K562 (cell line): ENCODE measurements at regions of chr9 and their contacts with region 1.

Region 1: DNA sequence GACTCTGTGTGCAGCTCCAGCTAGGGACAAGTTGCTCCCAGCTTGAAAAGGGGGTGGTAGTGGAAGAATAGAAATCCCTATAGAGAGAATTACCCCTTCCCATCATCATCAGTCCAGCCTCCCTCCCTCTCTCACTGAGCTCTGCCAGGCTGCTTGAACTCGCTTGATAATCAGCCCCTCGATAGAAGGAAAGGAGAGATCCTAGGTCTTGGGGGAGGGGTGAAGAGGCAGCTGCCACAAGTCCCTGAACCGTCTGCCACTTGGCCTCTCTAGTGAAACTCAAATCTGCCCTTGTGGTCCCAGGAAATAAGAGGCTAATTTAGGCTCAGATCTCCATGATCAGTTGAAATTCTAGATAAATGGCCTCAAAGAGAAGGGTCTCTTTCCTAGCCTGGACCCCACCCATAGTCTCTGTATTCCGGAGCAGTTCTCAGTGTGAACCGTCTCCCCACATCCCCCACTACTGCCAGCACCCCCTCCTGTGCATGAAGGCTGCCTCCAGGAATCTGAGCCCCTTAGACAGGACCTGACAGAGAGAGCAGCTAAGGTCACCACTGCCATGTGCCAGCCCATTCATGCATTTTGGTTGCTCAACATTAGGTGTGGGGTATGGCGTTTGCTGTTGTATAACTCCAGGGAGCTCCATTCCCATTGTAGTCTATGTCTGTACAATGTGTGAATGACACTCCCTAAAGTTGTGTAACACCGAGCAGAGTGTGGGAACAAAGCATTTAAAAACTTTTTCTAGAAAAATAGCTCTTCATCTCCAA is 5.5 kb downstream of the DNAJB5 start:
- DNase-seq: no peak
- ATAC-seq: peak; percentile 7; the same call in 2 of the 3 replicates
- H3K4me3 ChIP-seq: no peak overlapping the region
- H3K27ac ChIP-seq: peak overlapping the region; percentile 56; the same call in 2 of the 3 replicates
- H3K4me1 ChIP-seq: peaks cover 54 to 69% of the 10 kb centered on the region in 2 experiments
- H3K27me3 ChIP-seq: no peaks in the 10 kb centered on the region
- CTCF ChIP-seq: no peak
- EP300 ChIP-seq: no peak
- POLR2A ChIP-seq: no peak
- RAD21 ChIP-seq: no peak

Region 2: GRCh38 chr9:34927061-34927460 is 68.0 kb before region 1 on chr9:
- CTCF ChIA-PET with region 1: no interaction called
- POLR2A ChIA-PET with region 1: no interaction called
- in situ Hi-C with region 1: no loop called
- intact Hi-C with region 1: no loop called
- DNase-seq: no peak
- ATAC-seq: no peak
- H3K4me3 ChIP-seq: no peak overlapping the region
- H3K27ac ChIP-seq: no peak overlapping the region
- H3K4me1 ChIP-seq: no peaks in the 10 kb centered on the region
- H3K27me3 ChIP-seq: peaks cover 0 to 2% of the 10 kb centered on the region in 2 experiments; a peak in 1 of 5 replicates
- CTCF ChIP-seq: no peak
- EP300 ChIP-seq: no peak
- POLR2A ChIP-seq: no peak
- RAD21 ChIP-seq: no peak

Region 3: DNA sequence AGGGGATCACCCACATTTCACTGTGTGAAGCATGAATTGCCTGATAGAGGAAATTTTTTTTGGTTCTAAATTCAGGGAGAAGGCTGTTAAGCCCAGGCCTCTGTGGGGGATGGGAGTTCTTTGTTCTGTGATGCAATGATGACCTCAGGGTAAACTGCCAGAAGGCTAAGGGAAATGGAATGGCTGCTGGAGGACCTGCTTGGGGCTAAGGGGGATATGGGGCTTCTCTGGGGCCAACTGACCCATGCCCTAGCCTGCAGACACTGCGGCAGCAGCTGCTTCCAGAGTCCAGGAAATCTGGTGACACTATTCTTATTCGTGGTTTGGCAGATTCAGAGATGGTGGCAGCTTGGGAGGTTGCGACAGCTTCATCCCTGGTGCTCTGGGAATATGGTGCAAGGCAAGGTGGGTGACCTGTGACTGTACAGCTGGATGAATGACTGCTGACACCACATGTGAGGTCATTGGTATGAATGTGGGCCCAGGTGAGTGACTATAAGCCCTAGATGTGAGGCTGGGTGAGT is 47.1 kb after region 1 on chr9:
- CTCF ChIA-PET with region 1: no interaction called
- POLR2A ChIA-PET with region 1: interaction called, 5 read pairs
- in situ Hi-C with region 1: loop called (anchors 5 kb)
- intact Hi-C with region 1: no loop called
- DNase-seq: peak in 1 of 4 experiments; percentile 23
- ATAC-seq: peak; percentile 72
- H3K4me3 ChIP-seq: no peak overlapping the region
- H3K27ac ChIP-seq: no peak overlapping the region
- H3K4me1 ChIP-seq: peaks cover 3 to 8% of the 10 kb centered on the region in 2 experiments; a peak in 3 of 5 replicates
- H3K27me3 ChIP-seq: no peaks in the 10 kb centered on the region
- CTCF ChIP-seq: no peak
- EP300 ChIP-seq: no peak
- POLR2A ChIP-seq: no peak
- RAD21 ChIP-seq: no peak

Region 4: DNA sequence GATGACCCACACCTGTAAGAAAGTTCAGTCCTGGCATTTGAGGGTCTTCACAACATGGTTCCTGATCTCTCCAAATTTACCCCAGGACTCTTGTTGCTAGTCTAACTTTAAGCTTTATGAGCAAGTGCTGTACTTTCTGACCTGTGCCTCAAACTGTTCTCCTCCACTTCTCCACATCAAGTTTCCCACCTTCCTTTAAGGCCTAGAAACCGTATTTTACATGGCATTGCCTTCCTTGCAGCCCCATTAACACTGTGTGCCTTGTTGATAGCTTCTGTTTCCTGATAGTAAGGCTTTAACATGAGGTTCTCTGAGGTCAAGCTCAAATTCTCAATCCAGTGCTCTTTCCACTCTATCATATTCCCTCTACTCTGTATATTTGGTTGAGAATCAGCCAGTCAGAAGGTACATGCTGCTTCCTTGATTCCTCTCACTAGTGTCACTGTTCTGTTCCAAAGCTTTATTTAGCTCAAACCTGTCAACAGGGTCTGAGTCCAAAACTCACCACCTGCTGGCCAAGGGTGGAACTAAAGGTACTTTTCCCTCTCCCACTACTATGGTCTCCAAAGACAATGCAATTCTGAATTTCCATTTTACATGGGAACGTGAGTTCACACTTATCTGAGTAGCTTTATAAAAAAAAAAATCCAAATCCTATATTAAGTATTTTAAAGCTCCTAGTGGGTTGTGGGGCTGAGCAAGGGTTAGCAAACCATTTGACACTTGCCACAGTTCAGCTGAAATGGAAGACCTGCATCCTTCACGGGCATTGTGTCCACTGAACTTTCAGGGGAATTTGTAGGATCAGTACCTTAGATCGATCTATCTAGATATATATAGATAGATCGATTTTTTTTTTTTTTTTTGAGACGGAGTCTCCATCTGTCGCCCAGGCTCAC is 56.2 kb after region 1 on chr9:
- CTCF ChIA-PET with region 1: no interaction called
- POLR2A ChIA-PET with region 1: no interaction called
- in situ Hi-C with region 1: no loop called
- intact Hi-C with region 1: loop called (anchors 5 kb)
- DNase-seq: peak; percentile 43 to 72 (median 50)
- ATAC-seq: peak; percentile 92
- H3K4me3 ChIP-seq: no peak overlapping the region
- H3K27ac ChIP-seq: no peak overlapping the region
- H3K4me1 ChIP-seq: peaks cover 0 to 2% of the 10 kb centered on the region in 2 experiments; a peak in 2 of 5 replicates
- H3K27me3 ChIP-seq: no peaks in the 10 kb centered on the region
- CTCF ChIP-seq: peak; percentile 68 to 71 (median 70)
- EP300 ChIP-seq: no peak
- POLR2A ChIP-seq: no peak
- RAD21 ChIP-seq: peak; percentile 27 to 73; a peak in 3 of 4 replicates

Region 5: GRCh38 chr9:35313916-35314315 is 318.8 kb after region 1 on chr9:
- CTCF ChIA-PET with region 1: no interaction called
- POLR2A ChIA-PET with region 1: no interaction called
- in situ Hi-C with region 1: no loop called
- intact Hi-C with region 1: no loop called
- DNase-seq: no peak
- ATAC-seq: no peak
- H3K4me3 ChIP-seq: no peak overlapping the region
- H3K27ac ChIP-seq: no peak overlapping the region
- H3K4me1 ChIP-seq: peaks cover 0 to 13% of the 10 kb centered on the region in 2 experiments; a peak in 2 of 5 replicates
- H3K27me3 ChIP-seq: no peaks in the 10 kb centered on the region
- CTCF ChIP-seq: no peak
- EP300 ChIP-seq: no peak
- POLR2A ChIP-seq: no peak
- RAD21 ChIP-seq: no peak